Transverse colon (tissue), 4 donors: ENCODE measurements at regions of chr5 and their contacts with region 1.

Region 1: DNA sequence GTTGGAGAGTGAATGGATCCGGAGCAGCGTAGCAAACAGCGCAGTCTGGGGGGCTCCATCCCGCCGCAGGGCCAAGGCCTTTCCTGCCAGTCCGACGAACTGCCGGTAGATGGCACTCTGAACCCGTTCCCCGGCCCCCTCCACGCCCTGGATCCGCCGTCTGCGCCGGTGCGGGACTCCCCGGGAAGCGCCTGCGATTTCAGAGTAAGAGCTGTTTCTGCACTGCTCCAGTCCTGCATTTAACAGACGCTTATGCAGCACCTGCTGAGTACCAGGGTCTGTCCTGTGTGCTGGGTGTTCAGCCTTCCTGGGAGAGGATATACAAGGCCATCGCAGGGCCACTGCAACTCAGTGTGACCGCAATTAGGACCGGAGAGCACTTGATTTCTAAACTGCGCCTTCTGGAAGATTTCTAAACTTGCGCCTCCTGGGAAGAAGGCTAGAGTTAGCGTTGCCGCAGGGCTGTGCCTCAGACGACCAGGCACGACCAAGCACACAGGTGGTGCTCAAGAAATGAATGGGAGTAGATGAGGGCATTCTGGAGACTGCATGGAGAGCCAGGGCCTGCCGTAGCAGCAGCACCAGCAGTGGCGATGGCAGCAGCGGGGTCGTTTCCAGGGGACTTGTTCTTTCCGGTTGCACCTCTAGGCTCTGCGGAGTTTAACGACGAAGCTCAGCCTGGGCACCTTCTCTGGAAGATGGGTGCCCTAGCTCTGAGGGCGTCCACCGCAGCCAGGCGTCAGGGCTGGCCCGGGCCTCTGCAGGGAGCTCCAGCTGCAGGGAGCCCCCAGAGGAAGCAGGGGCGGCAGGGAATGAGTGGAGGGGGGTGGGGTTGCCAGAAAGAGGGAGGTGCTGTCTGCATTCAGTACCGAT is 14.3 kb upstream of the TIFAB start:
- DNase-seq: peak; percentile 73
- H3K4me3 ChIP-seq: peak overlapping the region in 1 of 4 donors; percentile 27
- H3K27ac ChIP-seq: no peak overlapping the region
- H3K4me1 ChIP-seq: peaks cover 0 to 9% (median 2%) of the 10 kb centered on the region in 4 donors
- H3K27me3 ChIP-seq: peaks cover 69% of the 10 kb centered on the region
- CTCF ChIP-seq: peak; percentile 60 to 83 (median 79)
- EP300 ChIP-seq: no peak
- POLR2A ChIP-seq: no peak

Region 2: DNA sequence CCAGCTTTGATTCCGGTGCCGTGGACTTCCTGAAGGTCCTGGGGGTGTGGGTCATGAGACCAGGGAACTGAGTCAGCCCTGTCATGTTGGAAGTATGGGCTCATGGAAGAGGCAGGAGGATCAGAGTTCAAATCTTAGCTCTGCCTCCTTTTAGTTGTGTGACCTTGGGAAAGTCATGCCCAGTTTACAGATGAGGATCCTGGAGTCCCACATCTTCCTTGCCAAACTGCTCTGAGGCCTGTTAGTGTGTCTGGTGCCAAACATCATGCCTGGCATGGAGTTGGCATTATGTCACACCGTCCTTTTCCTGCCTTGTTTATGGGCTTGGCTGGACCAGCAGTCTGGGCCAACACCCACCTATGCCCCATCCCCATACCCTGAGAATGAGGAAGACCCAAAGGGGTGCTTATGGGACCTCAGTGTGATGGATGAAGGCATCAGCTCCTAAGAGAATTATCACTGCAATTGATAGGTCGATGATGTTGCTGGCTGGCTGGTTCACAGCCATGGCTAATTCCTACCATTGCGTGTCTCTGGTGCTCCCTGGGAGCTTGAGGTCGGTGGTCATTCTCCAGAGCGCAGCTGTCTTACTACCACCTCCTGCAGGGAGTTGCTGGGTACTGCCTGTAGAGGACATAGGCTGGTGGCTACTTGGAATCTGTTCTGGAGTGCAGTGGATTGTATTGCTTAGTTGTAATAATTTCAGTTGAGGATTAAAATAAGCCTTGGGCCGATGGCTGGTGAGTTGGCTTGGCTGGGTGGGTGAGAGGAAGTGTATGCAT is 291.9 kb before region 1 on chr5:
- in situ Hi-C with region 1: no loop called
- intact Hi-C with region 1: no loop called
- DNase-seq: no peak
- H3K4me3 ChIP-seq: no peak overlapping the region
- H3K27ac ChIP-seq: no peak overlapping the region
- H3K4me1 ChIP-seq: no peaks in the 10 kb centered on the region
- H3K27me3 ChIP-seq: peaks cover 10% of the 10 kb centered on the region
- CTCF ChIP-seq: no peak
- EP300 ChIP-seq: no peak
- POLR2A ChIP-seq: no peak

Region 3: DNA sequence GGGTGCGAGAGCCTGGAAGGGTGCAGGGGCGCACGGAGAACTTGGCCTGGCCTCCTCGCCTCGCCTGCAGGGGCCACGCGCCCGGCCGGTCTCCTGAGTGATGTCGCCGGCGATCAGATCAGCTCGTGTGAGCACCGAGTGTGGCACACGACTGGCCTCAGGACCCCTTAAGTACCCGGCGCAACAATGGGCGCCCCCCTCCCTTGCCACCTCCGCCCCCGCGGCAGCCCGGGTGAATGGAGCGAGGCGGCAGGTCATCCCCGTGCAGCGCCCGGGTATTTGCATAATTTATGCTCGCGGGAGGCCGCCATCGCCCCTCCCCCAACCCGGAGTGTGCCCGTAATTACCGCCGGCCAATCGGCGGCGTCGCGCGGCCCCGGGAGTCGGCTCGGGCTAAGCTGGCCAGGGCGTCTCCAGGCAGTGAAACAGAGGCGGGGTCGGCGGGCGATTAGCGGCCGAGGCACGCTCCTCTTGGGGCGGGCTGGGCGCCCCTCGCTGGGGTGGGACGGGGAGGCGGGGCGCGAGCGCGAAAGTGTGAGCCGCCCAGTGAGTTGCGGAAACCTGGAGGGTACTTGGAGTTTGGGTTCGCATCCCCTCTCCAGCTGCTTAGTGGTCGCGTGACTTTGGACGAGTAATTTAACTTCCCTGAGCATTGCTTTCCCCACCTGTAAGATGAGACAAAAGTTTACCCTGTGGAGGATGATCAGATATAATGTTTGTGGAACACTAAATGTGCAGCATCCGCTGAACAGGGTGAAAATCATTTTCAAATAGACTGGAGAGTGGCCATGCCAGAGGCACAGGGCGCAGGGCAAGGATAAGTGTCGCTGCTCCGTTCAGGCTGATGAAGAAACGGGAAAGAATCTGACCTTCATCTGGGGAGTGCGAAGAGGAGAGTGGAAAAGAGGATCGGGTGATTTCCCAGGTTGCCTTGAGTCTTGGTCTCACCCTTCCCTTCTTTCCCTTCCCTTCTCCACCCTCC is 69.7 kb after region 1 on chr5 and contains the start of gene NEUROG1:
- in situ Hi-C with region 1: no loop called
- intact Hi-C with region 1: loop called (anchors 5 kb)
- DNase-seq: no peak
- H3K4me3 ChIP-seq: peak within 1 kb of the TSS in 1 of 4 donors; percentile 32
- H3K27ac ChIP-seq: no peak within 1 kb of the TSS
- H3K4me1 ChIP-seq: peaks cover 6 to 18% (median 14%) of the 10 kb centered on the region in 4 donors
- H3K27me3 ChIP-seq: peaks cover 98% of the 10 kb centered on the region
- CTCF ChIP-seq: no peak
- EP300 ChIP-seq: no peak
- POLR2A ChIP-seq: no peak
- total RNA-seq, gene NEUROG1: not detected

Region 4: GRCh38 chr5:135551593-135552447 is 85.4 kb after region 1 on chr5:
- in situ Hi-C with region 1: loop called (anchors 5 to 10 kb)
- intact Hi-C with region 1: loop called (anchors 2 kb)
- DNase-seq: peak; percentile 67
- H3K4me3 ChIP-seq: no peak overlapping the region
- H3K27ac ChIP-seq: no peak overlapping the region
- H3K4me1 ChIP-seq: no peaks in the 10 kb centered on the region
- H3K27me3 ChIP-seq: peaks cover 44% of the 10 kb centered on the region
- CTCF ChIP-seq: peak; percentile 72 to 88 (median 80)
- EP300 ChIP-seq: no peak
- POLR2A ChIP-seq: no peak

Region 5: DNA sequence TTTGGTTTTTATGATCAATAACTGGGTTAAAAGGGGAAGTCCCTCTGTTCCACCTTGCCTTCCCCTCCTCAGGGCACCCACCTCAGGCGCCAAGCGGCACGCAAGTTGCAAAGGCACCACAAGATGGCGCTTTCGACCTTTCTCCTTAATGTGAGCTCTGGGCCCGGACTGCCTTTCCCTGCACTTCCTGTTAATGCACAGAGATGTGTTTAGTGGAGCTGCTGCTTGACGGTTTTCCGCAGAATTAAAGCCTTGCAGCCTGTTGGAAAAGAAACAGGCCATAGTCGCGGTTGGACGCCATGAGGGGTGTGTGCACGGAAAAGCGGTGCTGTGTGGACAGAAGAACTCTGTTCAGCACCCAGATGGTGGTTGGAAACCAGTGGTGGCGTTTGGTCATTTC is 94.4 kb after region 1 on chr5:
- in situ Hi-C with region 1: loop called in 3 of 4 experiments (anchors 5 to 10 kb)
- intact Hi-C with region 1: no loop called
- DNase-seq: peak; percentile 79
- H3K4me3 ChIP-seq: no peak overlapping the region
- H3K27ac ChIP-seq: no peak overlapping the region
- H3K4me1 ChIP-seq: no peaks in the 10 kb centered on the region
- H3K27me3 ChIP-seq: peaks cover 29% of the 10 kb centered on the region
- CTCF ChIP-seq: peak; percentile 74 to 83 (median 76)
- EP300 ChIP-seq: no peak
- POLR2A ChIP-seq: no peak